ENCODE measurements at regions of chr10 and their contacts with region 1.

Region 1: GRCh38 chr10:60704480-60704879 is 73.8 kb upstream of the CDK1 start:
- DNase-seq: no peak
- ATAC-seq: no peak
- H3K4me3 ChIP-seq: no peak overlapping the region
- H3K27ac ChIP-seq: no peak overlapping the region
- H3K4me1 ChIP-seq: no peaks in the 10 kb centered on the region
- H3K27me3 ChIP-seq: no peaks in the 10 kb centered on the region
- CTCF ChIP-seq: no peak
- EP300 ChIP-seq: no peak
- POLR2A ChIP-seq: no peak
- RAD21 ChIP-seq: no peak

Region 2: DNA sequence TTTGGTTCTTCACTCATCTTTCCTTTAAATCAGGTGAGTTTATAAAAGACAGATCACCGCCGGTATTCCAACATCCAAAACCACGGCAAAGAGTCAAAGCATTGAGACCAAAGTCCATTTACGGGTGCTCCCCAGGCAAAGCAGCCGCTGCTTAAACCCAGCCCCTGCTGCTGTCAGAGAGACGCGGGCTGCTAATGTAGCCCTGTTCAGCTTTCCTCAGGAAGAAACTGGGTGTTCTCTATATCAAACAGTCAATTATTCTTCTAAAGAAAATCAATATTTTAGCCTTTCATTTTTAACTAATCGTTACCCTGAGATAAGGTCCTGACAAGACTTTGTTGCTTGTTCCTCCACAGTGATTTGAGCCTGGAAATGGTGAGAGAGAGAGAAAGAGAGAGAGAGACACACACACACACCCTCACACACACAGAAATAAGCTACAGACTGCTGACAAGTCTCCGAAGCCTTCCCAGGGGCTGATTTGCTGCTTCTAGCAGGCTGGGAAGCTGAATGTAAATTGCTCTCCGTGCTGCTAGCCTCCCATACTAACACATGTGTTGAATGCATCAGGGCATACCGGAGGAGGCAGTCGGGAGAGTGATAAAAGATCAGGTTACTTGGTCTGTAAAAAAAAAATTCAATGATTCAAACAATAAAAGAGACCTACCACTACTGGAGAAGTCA is 131.8 kb before region 1 on chr10:
- CTCF ChIA-PET with region 1: no interaction called
- POLR2A ChIA-PET with region 1: no interaction called
- in situ Hi-C with region 1: no loop called
- intact Hi-C with region 1: no loop called
- DNase-seq: no peak
- ATAC-seq: no peak
- H3K4me3 ChIP-seq: no peak overlapping the region
- H3K27ac ChIP-seq: no peak overlapping the region
- H3K4me1 ChIP-seq: no peaks in the 10 kb centered on the region
- H3K27me3 ChIP-seq: peaks cover 0 to 7% of the 10 kb centered on the region in 2 experiments; a peak in 2 of 5 replicates
- CTCF ChIP-seq: no peak
- EP300 ChIP-seq: no peak
- POLR2A ChIP-seq: no peak
- RAD21 ChIP-seq: no peak

Region 3: GRCh38 chr10:60687679-60688078 is 16.8 kb before region 1 on chr10:
- CTCF ChIA-PET with region 1: no interaction called
- POLR2A ChIA-PET with region 1: no interaction called
- in situ Hi-C with region 1: no loop called
- intact Hi-C with region 1: loop called (anchors 1 kb)
- DNase-seq: no peak
- ATAC-seq: no peak
- H3K4me3 ChIP-seq: no peak overlapping the region
- H3K27ac ChIP-seq: no peak overlapping the region
- H3K4me1 ChIP-seq: peaks cover 0 to 3% of the 10 kb centered on the region in 2 experiments; a peak in 1 of 5 replicates
- H3K27me3 ChIP-seq: peaks cover 2 to 4% of the 10 kb centered on the region in 2 experiments; a peak in 1 of 5 replicates
- CTCF ChIP-seq: no peak
- EP300 ChIP-seq: no peak
- POLR2A ChIP-seq: no peak
- RAD21 ChIP-seq: no peak

Measured in K562 (cell line).